Lower lobe of right lung (tissue), 2 donors: ENCODE measurements at regions of chr3 and their contacts with region 1.

Region 1: DNA sequence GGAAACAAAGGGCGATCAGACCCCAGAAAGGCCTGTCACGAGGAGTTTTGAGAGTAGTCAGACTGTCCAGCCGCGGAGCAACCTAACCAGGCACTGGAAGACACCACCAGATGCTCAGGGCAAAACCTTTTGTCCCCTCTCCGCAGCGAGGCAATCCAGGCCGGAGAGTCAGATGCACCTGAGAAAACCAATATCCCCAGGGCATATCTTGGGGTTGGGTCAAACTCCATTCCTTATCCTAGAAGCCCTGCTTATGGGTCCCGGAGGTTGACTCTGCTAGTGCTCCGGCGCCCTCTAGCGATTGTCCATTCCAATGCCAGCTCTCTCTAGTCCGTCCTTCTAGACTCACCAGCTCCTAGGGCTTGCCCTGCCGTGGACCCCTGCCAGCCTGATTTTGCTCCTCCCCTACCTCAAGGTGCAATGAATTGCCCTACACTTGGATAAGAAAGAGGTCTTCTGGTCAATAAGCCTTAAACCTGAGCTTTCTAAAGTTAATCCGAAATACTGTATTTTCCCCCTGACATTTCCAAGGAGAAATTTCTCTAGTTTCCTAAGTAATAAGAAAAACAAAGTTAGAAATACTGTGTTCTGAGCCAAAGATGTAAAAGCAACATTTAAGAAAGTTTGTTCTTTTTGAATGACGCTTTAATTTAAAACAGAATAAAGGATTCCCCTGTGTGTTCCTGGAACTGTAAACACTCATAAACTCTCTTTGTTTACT is 5.5 kb downstream of the CPNE4 start:
- DNase-seq: peak; percentile 86
- ATAC-seq: peak; percentile 93 to 95
- H3K4me3 ChIP-seq: no peak overlapping the region
- H3K27ac ChIP-seq: no peak overlapping the region
- H3K4me1 ChIP-seq: peaks cover 5% of the 10 kb centered on the region
- H3K27me3 ChIP-seq: peaks cover 15% of the 10 kb centered on the region
- CTCF ChIP-seq: peak; percentile 84

Region 2: DNA sequence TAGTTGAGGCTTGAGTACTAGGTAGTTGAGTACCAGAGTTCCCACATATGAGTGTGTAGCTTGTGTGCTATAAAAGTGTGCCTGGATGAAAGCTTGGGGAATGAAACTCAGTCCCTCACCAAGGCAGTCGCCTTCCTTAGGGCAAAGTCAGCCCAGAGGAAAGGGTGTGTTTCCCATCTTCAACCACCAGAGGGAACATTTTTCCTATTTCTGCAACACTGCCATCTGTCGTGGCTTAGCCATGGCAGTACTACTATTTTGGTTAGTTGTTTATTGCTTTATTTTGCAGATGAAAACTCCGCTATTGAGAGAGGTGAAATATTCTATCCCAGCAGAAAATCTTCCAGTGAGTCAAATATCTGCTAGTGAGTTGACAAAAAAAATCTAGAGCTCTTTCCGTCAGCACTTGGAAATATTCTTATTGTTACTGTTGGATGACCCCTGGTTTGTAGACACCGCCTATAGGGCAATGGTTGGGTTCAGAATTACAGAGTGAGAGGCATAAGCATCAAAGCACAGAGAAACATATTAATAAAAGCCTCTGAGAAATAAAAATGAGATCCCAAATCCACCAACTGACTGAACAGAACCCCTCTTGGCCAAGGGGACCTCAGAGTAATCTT is 234.5 kb before region 1 on chr3:
- intact Hi-C with region 1: loop called (anchors 5 kb)
- DNase-seq: no peak
- ATAC-seq: peak; percentile 79 to 87
- H3K4me3 ChIP-seq: no peak overlapping the region
- H3K27ac ChIP-seq: no peak overlapping the region
- H3K4me1 ChIP-seq: no peaks in the 10 kb centered on the region
- H3K27me3 ChIP-seq: no peaks in the 10 kb centered on the region
- CTCF ChIP-seq: peak; percentile 86

Region 3: GRCh38 chr3:131901686-131902085 is 127.7 kb before region 1 on chr3:
- intact Hi-C with region 1: no loop called
- DNase-seq: no peak
- ATAC-seq: no peak
- H3K4me3 ChIP-seq: no peak overlapping the region
- H3K27ac ChIP-seq: no peak overlapping the region
- H3K4me1 ChIP-seq: no peaks in the 10 kb centered on the region
- H3K27me3 ChIP-seq: no peaks in the 10 kb centered on the region
- CTCF ChIP-seq: no peak

Region 4: DNA sequence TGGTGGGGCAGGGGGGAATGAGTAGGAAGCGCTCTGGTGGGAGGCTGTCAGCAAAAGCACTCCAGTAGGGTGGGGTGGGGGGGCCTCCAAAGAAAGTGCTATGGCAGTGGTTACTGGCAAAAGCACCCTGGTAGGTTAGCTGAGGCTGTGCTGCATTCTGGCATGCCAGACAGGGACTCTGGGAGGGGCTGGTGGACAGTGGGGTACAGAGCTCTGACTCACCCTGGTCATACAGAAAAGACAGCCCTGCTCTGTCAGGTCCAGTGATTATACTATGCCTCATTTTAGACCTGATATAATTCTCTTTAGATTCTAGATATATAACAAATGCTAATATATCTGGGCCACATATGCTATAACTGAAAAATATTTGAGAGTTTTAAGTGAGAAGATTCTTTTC is 88.3 kb after region 1 on chr3:
- intact Hi-C with region 1: no loop called
- DNase-seq: no peak
- ATAC-seq: no peak
- H3K4me3 ChIP-seq: no peak overlapping the region
- H3K27ac ChIP-seq: no peak overlapping the region
- H3K4me1 ChIP-seq: no peaks in the 10 kb centered on the region
- H3K27me3 ChIP-seq: no peaks in the 10 kb centered on the region
- CTCF ChIP-seq: no peak

Region 5: DNA sequence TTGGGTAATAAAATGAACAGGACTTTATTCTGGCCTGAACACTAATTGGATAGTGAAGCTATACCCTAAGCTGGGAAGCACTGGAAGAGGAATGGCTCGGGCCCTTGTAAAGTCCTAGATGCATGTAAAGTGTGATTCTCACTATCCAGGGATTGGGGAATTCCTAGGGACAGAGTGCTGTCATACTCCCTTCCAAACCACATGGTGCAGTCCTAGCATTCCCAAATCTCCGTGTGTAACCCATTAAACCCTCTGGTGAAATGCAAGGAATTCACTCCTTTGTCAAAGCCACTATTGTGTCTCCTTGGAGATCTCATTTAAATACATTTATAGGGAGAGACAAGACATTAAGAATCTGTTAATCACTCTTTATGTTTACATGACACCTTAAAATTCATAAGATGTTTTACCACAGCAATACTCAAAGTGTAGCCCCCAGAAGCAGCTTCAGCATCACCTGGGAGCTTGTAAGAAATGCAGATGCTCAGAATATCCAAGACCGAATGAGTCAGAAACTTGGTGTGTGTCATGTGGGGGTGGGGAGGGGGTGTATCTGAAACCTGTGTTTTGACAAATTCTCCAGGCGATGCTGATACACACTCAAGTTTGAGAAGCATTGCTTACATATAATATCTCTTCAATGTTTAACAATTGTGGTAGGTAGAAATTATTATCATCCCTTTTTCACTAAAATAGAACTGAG is 814.7 kb after region 1 on chr3:
- intact Hi-C with region 1: no loop called
- DNase-seq: no peak
- ATAC-seq: no peak
- H3K4me3 ChIP-seq: no peak overlapping the region
- H3K27ac ChIP-seq: no peak overlapping the region
- H3K4me1 ChIP-seq: no peaks in the 10 kb centered on the region
- H3K27me3 ChIP-seq: no peaks in the 10 kb centered on the region
- CTCF ChIP-seq: no peak